AG04450 (cell line): ENCODE measurements at regions of chr17 and their contacts with region 1.

Region 1: DNA sequence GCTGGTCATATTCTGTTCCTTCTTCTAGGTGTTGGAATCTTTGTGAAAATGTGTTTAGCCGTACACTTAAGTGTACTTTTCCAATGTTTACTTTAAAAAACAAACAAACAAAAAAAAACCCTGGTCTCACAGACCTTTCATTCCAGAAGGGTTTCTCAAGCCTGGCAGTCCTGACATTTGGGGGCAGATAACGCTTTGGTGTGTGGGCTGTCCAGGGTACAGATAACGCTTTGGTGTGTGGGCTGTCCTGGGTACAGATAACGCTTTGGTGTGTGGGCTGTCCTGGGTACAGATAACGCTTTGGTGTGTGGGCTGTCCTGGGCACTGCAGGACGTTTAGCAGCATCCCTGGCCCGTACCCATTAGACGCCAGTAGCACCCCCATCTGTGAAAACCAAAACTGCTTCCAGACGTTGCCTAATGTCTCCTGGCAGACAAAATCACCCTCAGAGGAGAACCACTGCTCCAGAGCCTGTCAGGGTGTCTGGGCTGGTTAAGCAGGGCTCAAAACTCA is 15.2 kb upstream of the FLCN start:
- DNase-seq: no peak
- H3K4me3 ChIP-seq: no peak overlapping the region
- H3K27ac ChIP-seq: no peak overlapping the region
- H3K27me3 ChIP-seq: no peaks in the 10 kb centered on the region
- CTCF ChIP-seq: no peak

Region 2: GRCh38 chr17:17051791-17052461 is 200.3 kb before region 1 on chr17:
- CTCF ChIA-PET with region 1: no interaction called
- POLR2A ChIA-PET with region 1: no interaction called
- DNase-seq: no peak
- H3K4me3 ChIP-seq: no peak overlapping the region
- H3K27ac ChIP-seq: peak overlapping the region; percentile 11
- H3K27me3 ChIP-seq: no peaks in the 10 kb centered on the region
- CTCF ChIP-seq: no peak

Region 3: DNA sequence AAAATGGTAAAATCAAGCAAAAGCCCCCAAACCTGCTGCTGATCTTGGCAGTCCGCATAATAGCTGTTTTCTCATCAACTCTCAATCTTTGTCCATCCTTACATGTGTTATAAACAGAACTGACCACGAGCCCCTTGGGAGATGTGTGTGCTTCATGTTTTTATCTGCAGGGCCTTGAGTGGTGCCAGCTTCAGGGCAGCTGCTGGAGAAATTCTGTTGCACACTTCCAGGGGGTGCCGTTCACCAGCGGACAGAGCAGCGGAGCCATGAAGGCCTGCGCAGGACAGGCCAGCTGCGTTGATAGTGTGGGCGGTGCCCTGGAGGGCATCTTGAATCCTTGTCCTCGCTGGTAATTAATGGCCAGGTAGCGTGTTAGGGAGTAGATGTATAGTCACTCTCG is 189.8 kb before region 1 on chr17:
- CTCF ChIA-PET with region 1: interaction called, 10 read pairs
- POLR2A ChIA-PET with region 1: no interaction called
- DNase-seq: no peak
- H3K4me3 ChIP-seq: no peak overlapping the region
- H3K27ac ChIP-seq: no peak overlapping the region
- H3K27me3 ChIP-seq: no peaks in the 10 kb centered on the region
- CTCF ChIP-seq: no peak

Region 4: GRCh38 chr17:17216776-17217175 is 35.4 kb before region 1 on chr17:
- CTCF ChIA-PET with region 1: no interaction called
- POLR2A ChIA-PET with region 1: no interaction called
- DNase-seq: no peak
- H3K4me3 ChIP-seq: no peak overlapping the region
- H3K27ac ChIP-seq: no peak overlapping the region
- H3K27me3 ChIP-seq: no peaks in the 10 kb centered on the region
- CTCF ChIP-seq: no peak